ENCODE measurements at regions of chr1 and their contacts with region 1.

Region 1: GRCh38 chr1:17059739-17060460 is 6.1 kb upstream of the SDHB start:
- DNase-seq: peak; percentile 83
- ATAC-seq: peak; percentile 99
- H3K4me3 Mint-ChIP-seq: no peak overlapping the region
- H3K27ac Mint-ChIP-seq: peak overlapping the region; percentile 17; the same call in 1 of the 2 replicates
- H3K4me1 Mint-ChIP-seq: peaks cover 39% of the 10 kb centered on the region
- H3K27me3 Mint-ChIP-seq: no peaks in the 10 kb centered on the region
- CTCF ChIP-seq: peak; percentile 50; the same call in 1 of the 2 replicates

Region 2: GRCh38 chr1:17001760-17002523 is 58.0 kb before region 1 on chr1:
- CTCF ChIA-PET with region 1: no interaction called
- POLR2A ChIA-PET with region 1: no interaction called
- DNase-seq: no peak
- ATAC-seq: no peak
- H3K4me3 Mint-ChIP-seq: no peak overlapping the region
- H3K27ac Mint-ChIP-seq: no peak overlapping the region
- H3K4me1 Mint-ChIP-seq: peaks cover 1% of the 10 kb centered on the region
- H3K27me3 Mint-ChIP-seq: no peaks in the 10 kb centered on the region
- CTCF ChIP-seq: no peak

Region 3: GRCh38 chr1:17098446-17099251 is 38.7 kb after region 1 on chr1:
- CTCF ChIA-PET with region 1: no interaction called
- POLR2A ChIA-PET with region 1: no interaction called
- DNase-seq: no peak
- ATAC-seq: no peak
- H3K4me3 Mint-ChIP-seq: no peak overlapping the region
- H3K27ac Mint-ChIP-seq: no peak overlapping the region
- H3K4me1 Mint-ChIP-seq: peaks cover 22% of the 10 kb centered on the region
- H3K27me3 Mint-ChIP-seq: no peaks in the 10 kb centered on the region
- CTCF ChIP-seq: no peak

Region 4: DNA sequence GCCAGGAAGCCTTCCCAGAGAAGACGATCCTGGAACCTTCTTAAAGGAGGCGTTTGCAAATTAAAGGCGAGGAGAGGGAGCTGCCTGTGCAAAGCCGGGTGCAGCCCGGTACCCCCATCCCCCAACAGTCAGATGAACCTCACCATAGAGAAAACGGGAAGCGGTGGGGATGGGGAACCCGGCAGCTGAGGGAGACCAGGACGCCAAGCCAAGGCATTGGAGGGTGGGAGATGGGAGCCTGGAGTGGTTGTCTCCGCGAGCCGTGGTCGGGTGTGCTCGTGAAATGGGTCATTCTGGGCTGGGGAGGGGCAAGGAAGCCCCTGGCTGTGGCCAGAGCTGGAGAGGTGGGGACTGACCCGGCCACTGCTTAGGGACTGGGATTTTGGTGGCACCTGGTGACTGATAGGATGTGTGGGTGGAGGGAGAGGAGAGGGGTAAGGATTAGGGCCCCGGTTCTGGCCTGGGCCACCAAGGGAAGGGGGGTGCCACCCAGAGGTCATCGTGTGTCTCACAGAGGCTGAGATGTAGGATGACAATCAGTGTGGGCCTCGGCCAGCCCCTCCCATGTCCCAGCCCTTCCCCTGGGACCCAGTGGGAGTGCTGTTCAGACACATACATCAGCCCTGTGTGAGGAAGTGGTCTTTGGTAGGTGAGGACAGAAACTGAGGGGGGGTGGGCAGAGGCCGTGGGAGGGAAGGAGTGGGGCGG is 60.0 kb after region 1 on chr1:
- CTCF ChIA-PET with region 1: interaction called, 19 read pairs
- POLR2A ChIA-PET with region 1: interaction called, 4 read pairs
- DNase-seq: no peak
- ATAC-seq: peak; percentile 24
- H3K4me3 Mint-ChIP-seq: peak overlapping the region; percentile 79
- H3K27ac Mint-ChIP-seq: no peak overlapping the region
- H3K4me1 Mint-ChIP-seq: peaks cover 19% of the 10 kb centered on the region
- H3K27me3 Mint-ChIP-seq: peaks cover 54% of the 10 kb centered on the region
- CTCF ChIP-seq: no peak

Measured in WTC11 (cell line).